ENCODE measurements at regions of chr1 and their contacts with region 1.

Region 1: DNA sequence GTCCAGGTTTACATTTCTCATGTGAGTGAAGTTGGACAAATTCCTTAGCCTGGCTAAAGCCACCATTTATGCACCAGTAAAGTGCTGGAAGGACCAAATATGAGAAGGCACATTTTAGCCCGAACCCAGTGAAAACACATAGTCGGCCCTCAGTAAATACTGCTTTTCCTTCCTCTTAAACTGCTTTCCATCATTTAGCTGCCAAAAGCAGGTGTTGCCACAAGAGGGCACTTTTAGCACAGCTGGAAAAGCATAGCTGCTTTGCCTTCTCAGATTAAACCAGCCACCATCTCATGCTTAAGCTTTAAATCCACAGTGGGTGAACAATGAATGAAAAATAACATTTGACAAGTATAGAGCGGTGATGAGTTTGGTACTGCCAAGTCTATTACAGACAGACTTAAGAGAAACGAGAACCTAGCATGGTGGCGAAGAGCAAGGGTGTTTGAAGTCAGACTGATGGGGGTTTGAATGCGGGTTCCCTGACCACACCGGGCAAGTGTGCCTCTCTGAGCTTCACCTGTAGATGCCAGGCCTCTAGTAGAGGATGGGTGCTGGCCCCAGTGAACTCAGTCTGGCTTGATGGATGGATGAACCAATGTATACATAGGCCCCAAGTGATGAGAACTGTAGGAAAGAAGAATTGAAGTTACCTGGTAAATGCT is 57.8 kb downstream of the SLC35D1 start:
- DNase-seq: peak; percentile 38
- H3K27ac ChIP-seq: no peak overlapping the region
- CTCF ChIP-seq: peak; percentile 83

Region 2: DNA sequence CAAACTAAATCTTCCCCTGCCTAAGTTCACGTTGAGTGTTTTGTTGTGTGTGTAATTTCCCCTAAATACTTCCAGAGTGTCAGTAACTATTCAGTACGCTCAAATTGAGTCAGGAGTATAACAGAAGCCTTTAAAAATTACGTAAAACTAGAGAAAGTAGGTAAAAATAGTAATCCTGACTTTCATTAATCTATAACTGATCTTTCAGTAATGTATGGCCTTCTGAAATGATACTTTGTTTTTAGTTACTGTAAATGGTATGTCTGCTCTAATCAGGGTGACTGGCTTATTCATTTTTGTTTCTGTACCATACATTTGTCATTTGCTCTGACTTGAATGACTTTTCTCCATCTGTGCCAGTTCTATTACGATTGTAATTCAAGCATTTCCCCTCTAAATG is 41.9 kb before region 1 on chr1:
- CTCF ChIA-PET with region 1: no interaction called
- POLR2A ChIA-PET with region 1: no interaction called
- DNase-seq: no peak
- H3K27ac ChIP-seq: no peak overlapping the region
- CTCF ChIP-seq: no peak

Region 3: GRCh38 chr1:67149179-67149770 is 153.1 kb after region 1 on chr1:
- CTCF ChIA-PET with region 1: interaction called, 37 read pairs
- POLR2A ChIA-PET with region 1: no interaction called
- DNase-seq: peak; percentile 68
- H3K27ac ChIP-seq: no peak overlapping the region
- CTCF ChIP-seq: peak; percentile 80

Region 4: DNA sequence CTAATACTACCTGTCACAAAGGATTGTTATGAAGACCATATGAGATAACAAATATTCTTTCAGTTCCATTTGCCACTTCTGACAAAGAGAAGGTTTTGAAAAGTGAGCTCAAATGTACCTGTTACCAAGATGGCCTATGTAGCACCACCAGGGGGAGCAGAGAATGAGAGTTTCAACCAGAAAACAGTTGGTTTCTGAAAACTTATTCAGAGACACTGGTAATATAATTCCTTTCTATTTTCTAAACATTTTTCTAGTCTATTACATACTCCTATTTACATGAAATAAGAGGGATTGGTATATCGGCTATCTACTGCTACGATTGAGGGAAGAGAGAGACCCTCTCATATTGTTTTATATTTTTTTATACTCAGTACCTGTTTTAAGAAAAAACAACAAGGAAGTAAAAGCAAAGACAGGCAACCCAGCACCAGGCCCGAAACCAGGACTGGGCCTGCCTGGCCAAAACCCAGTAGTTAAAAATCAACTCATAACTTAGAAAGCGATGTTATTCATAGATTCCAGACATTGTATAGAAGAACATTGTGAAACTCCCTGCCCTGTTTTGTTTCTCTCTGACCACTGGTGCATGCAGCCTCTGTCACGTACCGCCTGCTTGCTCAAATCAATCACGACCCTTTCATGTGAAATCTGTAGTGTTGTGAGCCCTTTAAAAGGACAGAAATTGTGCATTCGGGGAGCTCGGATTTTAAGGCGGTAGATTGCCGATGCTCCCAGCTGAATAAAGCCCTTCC is 218.4 kb after region 1 on chr1:
- CTCF ChIA-PET with region 1: interaction called, 10 read pairs
- POLR2A ChIA-PET with region 1: interaction called, 3 read pairs
- DNase-seq: peak; percentile 13
- H3K27ac ChIP-seq: no peak overlapping the region
- CTCF ChIP-seq: peak; percentile 56

Region 5: GRCh38 chr1:67250051-67250653 is 254.0 kb after region 1 on chr1:
- CTCF ChIA-PET with region 1: no interaction called
- POLR2A ChIA-PET with region 1: no interaction called
- DNase-seq: no peak
- H3K27ac ChIP-seq: no peak overlapping the region
- CTCF ChIP-seq: no peak